MCF 10A (cell line): ENCODE measurements at regions of chr5 and their contacts with region 1.

Region 1: GRCh38 chr5:135332519-135333150 is 66.4 kb downstream of the MACROH2A1 start:
- DNase-seq: peak; percentile 80
- H3K4me3 Mint-ChIP-seq: no peak overlapping the region
- H3K27ac Mint-ChIP-seq: no peak overlapping the region
- H3K4me1 Mint-ChIP-seq: peaks cover 14% of the 10 kb centered on the region
- H3K27me3 Mint-ChIP-seq: no peaks in the 10 kb centered on the region
- CTCF ChIP-seq: peak; percentile 75

Region 2: DNA sequence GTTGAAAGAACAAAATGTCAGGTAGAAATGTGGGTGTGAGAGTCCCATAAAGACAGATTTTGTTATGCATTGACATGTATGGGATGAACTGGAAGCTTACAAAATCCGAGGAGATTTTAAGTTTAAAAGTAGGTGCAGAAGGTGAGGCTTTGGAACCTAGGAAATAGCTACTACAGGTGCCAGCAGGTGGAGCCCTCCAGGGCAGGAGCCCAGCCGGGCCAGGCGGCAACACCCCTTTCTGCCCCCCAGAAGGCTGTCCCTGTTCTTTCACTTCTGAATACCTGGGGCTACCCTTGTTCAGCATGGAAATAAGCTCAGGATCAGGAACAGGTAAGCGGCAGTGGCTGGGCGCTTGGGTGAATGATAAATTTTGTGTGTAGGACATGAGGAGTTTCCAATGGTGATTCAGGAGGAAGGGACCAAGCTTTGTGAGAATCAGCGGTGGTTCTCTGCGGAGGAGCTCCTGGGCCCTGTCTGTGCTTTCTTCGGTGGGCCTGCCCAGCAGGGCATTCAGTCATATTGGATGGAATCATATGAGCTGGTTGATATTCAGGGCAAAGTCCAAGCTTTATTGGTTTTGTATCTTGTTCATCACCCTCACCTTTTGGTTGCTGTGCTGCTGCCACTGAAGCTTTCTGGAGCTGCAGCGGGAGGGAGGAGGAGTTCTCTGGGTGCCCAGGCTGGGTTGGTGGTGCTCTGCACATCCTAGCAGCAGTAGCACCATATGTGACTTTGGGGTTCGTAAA is 415.4 kb before region 1 on chr5:
- CTCF ChIA-PET with region 1: interaction called, 23 read pairs
- POLR2A ChIA-PET with region 1: no interaction called
- intact Hi-C with region 1: no loop called
- DNase-seq: no peak
- H3K4me3 Mint-ChIP-seq: no peak overlapping the region
- H3K27ac Mint-ChIP-seq: no peak overlapping the region
- H3K4me1 Mint-ChIP-seq: no peaks in the 10 kb centered on the region
- H3K27me3 Mint-ChIP-seq: no peaks in the 10 kb centered on the region
- CTCF ChIP-seq: peak; percentile 33

Region 3: GRCh38 chr5:135013947-135014570 is 318.6 kb before region 1 on chr5:
- CTCF ChIA-PET with region 1: interaction called, 10 read pairs
- POLR2A ChIA-PET with region 1: no interaction called
- intact Hi-C with region 1: loop called (anchors 5 kb)
- DNase-seq: no peak
- H3K4me3 Mint-ChIP-seq: no peak overlapping the region
- H3K27ac Mint-ChIP-seq: no peak overlapping the region
- H3K4me1 Mint-ChIP-seq: no peaks in the 10 kb centered on the region
- H3K27me3 Mint-ChIP-seq: no peaks in the 10 kb centered on the region
- CTCF ChIP-seq: no peak

Region 4: DNA sequence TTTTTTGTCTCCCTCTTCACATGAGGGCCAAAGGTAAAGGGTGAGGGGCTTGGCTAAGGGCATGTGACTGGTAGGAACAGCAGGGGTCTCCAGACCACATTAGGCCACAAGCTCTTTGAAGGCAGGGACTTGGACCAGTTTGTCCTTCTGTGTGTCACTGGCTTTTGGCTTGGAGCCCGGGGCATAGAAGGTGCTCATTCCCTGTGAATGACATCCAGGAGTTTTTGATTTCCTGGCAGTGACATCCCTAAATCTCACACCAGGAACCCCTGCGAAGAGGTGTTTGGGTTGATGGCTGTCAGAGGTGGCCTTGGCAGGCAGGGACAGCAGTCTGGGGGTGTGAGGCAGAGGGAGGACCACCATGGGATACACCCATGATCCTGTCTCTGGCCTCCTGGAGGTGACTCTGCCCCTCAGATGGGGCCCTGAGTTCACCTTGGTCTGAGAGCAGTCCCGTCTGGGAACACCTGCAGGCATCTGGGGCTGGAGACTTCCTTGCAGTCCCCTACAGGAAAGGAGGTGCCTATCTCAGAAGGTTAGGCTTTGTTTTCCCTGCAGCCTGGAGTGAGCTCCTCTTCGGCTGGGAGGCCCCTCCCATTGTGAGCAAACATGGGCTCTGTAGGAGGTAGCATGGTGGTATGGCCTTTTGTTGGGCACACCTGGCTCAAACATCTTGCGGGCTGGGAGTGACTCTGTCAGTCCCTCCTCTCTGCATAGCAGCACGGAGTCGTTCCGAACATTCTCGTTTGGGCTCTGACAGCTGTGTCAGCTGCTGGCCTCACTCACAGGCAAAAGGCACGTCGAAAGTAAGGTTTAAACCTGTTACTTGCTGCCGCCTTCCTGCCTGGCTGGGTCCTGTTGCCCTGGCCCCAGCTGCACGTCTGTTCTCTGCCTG is 260.0 kb before region 1 on chr5:
- CTCF ChIA-PET with region 1: no interaction called
- POLR2A ChIA-PET with region 1: no interaction called
- intact Hi-C with region 1: no loop called
- DNase-seq: no peak
- H3K4me3 Mint-ChIP-seq: no peak overlapping the region
- H3K27ac Mint-ChIP-seq: no peak overlapping the region
- H3K4me1 Mint-ChIP-seq: no peaks in the 10 kb centered on the region
- H3K27me3 Mint-ChIP-seq: no peaks in the 10 kb centered on the region
- CTCF ChIP-seq: no peak

Region 5: DNA sequence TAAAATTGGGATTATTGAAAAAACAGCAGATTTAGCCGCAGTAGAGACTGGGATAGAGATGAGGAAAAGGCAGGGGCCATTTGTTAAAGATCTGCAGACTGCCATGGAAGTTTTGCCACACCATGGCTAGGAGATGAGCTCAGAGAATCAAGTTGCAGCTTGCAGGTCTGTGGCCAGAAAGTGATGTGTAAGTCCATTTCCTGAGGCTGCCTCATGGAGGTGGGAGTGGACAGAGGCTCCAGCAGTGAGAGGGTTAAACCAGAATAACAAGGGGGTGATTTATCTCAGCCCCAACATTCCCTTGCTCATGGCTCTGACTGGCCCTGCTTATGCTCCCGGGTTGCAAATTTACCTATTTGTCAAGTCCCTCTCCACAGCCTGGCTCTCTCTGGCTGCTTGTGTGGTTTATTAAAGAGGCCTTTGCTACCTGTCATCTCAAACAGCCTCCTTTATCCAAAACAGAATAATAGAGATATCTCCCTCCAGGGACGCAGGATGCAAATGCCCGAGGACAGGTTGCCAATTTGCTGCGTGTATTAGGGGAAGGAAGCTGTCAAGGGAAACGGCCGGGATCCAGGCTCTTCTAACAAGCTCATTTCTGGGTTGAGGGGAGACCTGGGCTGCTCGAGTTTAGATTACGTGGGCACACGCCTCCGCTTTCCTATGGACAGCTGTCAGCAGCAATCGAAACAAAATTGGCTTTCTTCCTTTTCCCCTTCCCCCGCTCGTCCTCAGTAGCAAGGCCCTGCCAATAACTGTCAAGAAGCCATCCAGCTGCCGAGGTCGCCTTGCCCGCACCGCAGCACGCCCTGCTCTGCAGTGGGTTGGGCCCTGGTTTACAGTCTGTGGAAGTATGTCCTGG is 225.8 kb before region 1 on chr5:
- CTCF ChIA-PET with region 1: interaction called, 4 read pairs
- POLR2A ChIA-PET with region 1: no interaction called
- intact Hi-C with region 1: loop called (anchors 2 kb)
- DNase-seq: peak; percentile 78
- H3K4me3 Mint-ChIP-seq: no peak overlapping the region
- H3K27ac Mint-ChIP-seq: peak overlapping the region; percentile 33
- H3K4me1 Mint-ChIP-seq: peaks cover 20% of the 10 kb centered on the region
- H3K27me3 Mint-ChIP-seq: no peaks in the 10 kb centered on the region
- CTCF ChIP-seq: no peak

Region 6: DNA sequence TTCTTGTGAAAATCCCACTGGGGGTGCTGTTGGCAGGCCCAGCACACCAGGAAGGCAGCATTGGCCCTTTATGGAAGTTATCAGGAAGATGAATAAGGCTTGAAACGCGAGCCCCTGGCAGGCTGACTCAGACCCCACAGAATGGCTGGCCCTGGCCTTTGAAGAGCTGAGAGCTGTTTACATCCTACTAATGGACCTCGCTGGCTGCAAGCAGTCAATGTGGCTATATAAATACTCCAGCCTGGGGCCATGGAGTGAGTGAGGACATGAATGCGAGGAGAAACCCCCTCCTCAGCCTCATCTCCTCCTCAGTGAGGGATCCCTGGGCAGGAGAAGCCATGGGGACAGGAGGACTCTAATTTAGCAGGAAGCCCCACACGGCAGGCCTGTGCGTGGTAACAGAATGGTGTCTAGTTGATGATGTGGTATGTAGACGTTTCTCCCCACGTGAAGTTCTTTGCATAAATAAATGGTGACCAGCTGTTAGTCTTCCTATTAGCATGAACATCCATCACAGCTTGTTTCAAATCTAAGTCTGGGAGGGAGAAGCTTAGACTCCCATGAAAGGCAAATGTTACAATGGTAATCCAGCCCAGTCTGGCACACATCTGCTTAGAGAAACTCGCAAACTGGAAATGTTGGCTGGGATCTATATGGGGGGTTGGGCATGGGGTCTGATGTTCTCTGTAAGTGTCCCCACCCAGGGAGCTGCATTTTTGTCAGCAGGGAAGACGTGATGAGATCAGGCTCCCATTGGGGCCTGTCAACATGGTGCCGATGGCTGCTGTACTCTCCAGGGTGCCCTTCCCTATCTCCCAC is 123.5 kb before region 1 on chr5:
- CTCF ChIA-PET with region 1: interaction called, 4 read pairs
- POLR2A ChIA-PET with region 1: no interaction called
- intact Hi-C with region 1: loop called (anchors 1 kb)
- DNase-seq: peak; percentile 90
- H3K4me3 Mint-ChIP-seq: no peak overlapping the region
- H3K27ac Mint-ChIP-seq: peak overlapping the region; percentile 8
- H3K4me1 Mint-ChIP-seq: peaks cover 14% of the 10 kb centered on the region
- H3K27me3 Mint-ChIP-seq: no peaks in the 10 kb centered on the region
- CTCF ChIP-seq: no peak